ENCODE measurements at regions of chr2 and their contacts with region 1.

Region 1: GRCh38 chr2:197113275-197113711 is 186.8 kb upstream of the PGAP1 start:
- DNase-seq: no peak
- H3K4me3 ChIP-seq: no peak overlapping the region
- H3K27ac ChIP-seq: peak overlapping the region in 30 of 59 donors; percentile 0 to 74 (median 26)
- H3K27me3 ChIP-seq: no peaks in the 10 kb centered on the region
- CTCF ChIP-seq: peak; percentile 58 to 91 (median 77)

Region 2: GRCh38 chr2:197001921-197002320 is 111.4 kb before region 1 on chr2:
- intact Hi-C with region 1: no loop called
- DNase-seq: no peak
- H3K4me3 ChIP-seq: no peak overlapping the region
- H3K27ac ChIP-seq: no peak overlapping the region
- H3K27me3 ChIP-seq: no peaks in the 10 kb centered on the region
- CTCF ChIP-seq: no peak

Region 3: DNA sequence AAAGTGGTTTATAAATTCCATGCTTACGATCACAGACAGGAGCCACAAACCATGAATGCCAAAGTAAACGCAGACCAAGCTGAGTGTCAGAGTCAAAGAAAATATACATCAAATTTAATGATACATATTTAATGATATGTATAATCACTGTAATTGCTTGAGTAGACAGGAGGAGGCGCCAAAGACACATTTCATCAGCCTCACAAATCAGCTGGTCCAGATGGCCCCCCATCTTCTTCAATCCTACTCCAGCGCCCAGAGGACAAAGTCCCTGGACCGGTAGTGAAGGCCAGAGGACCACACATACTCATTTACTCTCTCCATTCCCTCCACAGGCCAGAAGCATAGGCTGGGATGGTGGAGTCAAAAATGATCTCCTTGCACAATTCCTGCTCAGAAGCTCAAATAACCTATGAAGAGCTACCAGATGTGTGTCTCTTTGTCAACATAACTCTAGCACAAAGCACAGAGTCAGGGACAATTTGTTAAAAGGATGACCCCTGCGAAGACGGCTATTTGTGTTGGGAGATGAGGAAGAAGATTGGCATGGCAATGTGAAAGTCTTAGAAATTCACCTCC is 37.4 kb before region 1 on chr2:
- intact Hi-C with region 1: loop called in 1 of 2 experiments (anchors 5 kb)
- DNase-seq: no peak
- H3K4me3 ChIP-seq: no peak overlapping the region
- H3K27ac ChIP-seq: peak overlapping the region in 54 of 59 donors; percentile 13 to 97 (median 92)
- H3K27me3 ChIP-seq: no peaks in the 10 kb centered on the region
- CTCF ChIP-seq: peak in 24 of 56 donors; percentile 10 to 39 (median 18)

Region 4: DNA sequence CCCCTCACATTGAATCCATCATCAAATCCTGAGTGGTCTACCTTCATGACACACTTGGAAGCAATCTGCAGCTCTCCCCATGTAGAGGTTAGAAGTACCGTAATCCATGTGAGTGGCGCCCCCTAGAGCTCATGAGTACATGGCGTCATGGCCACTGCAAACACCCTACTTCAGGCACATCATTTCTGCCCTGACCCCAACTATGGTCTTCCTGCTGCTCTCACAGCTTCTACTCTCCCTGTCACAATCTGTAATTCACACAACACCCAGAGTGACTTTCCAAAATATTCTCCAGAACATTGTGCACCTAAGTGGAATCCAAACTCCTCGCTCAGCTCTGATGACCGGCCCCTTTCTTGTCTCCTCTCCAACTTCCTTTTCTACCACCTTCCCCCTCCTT is 55.4 kb after region 1 on chr2:
- intact Hi-C with region 1: loop called (anchors 5 to 10 kb)
- DNase-seq: peak in 9 of 10 donors; percentile 25 to 84 (median 71)
- H3K4me3 ChIP-seq: peak overlapping the region in 6 of 59 donors; percentile 2 to 31 (median 17)
- H3K27ac ChIP-seq: peak overlapping the region in 27 of 59 donors; percentile 0 to 75 (median 38)
- H3K27me3 ChIP-seq: no peaks in the 10 kb centered on the region
- CTCF ChIP-seq: peak; percentile 47 to 83 (median 69)